Heart right ventricle (tissue), 16 donors: ENCODE measurements at regions of chr15 and their contacts with region 1.

Region 1: GRCh38 chr15:75578948-75579920 is at the start of gene PTPN9:
- DNase-seq: peak; percentile 83 to 87
- ATAC-seq: peak; percentile 88 to 93 (median 91)
- H3K4me3 ChIP-seq: peak within 1 kb of the TSS; percentile 57 to 99 (median 96)
- H3K27ac ChIP-seq: peak within 1 kb of the TSS; percentile 82 to 98 (median 94)
- H3K4me1 ChIP-seq: peaks cover 1 to 28% (median 24%) of the 10 kb centered on the region in 9 donors
- H3K27me3 ChIP-seq: no peaks in the 10 kb centered on the region
- CTCF ChIP-seq: peak; percentile 14 to 79 (median 56)
- total RNA-seq, gene PTPN9: 5.8 to 11.0 (median 8.4) TPM

Region 2: GRCh38 chr15:75468913-75469598 is 110.2 kb before region 1 on chr15:
- intact Hi-C with region 1: loop called in 1 of 10 experiments (anchors 10 kb)
- DNase-seq: peak in 1 of 2 donors; percentile 31
- ATAC-seq: peak in 2 of 8 donors; percentile 25 to 30
- H3K4me3 ChIP-seq: no peak overlapping the region
- H3K27ac ChIP-seq: peak overlapping the region in 1 of 10 donors; percentile 14
- H3K4me1 ChIP-seq: peaks cover 0 to 12% (median 8%) of the 10 kb centered on the region in 9 donors
- H3K27me3 ChIP-seq: no peaks in the 10 kb centered on the region
- CTCF ChIP-seq: no peak

Region 3: DNA sequence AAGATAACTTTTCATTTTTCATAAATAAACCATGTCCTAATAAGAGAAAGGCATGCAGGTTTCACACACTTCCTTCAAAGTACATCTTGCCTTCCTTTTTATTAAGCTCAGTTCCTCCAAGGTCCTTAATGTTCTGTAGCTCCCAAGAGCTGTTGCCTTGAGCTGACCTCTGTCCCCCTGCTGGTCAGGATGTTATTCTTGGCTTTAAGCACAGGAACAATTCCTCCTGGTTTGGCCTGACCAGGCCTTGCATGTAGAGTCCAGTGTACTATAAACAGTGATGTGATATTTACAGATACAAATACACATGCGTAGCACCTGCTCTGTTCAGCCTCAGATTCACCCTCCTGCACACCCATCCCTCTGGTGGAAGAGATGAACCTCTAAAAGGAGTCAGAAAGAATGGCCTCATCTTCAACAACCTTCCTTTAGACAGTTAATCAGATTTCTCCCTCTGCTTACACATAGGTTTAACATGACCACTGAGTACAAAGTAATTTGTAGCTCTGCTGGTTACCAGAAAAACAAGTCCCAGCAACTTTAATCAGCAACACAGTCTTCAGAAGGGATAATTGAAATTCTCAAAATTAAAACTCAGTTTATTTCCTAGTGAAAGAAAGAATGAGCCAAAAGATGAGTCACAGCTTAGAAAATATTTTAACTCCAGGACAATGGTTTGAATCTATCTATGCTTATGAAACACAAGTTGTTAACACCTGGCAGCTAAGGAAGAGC is 46.7 kb before region 1 on chr15:
- intact Hi-C with region 1: loop called in 6 of 10 experiments (anchors 2 to 5 kb)
- DNase-seq: peak; percentile 33 to 85
- ATAC-seq: peak; percentile 85 to 98 (median 95)
- H3K4me3 ChIP-seq: no peak overlapping the region
- H3K27ac ChIP-seq: peak overlapping the region in 9 of 10 donors; percentile 62 to 83 (median 74)
- H3K4me1 ChIP-seq: peaks cover 5 to 54% (median 33%) of the 10 kb centered on the region in 9 donors
- H3K27me3 ChIP-seq: no peaks in the 10 kb centered on the region
- CTCF ChIP-seq: peak; percentile 22 to 71 (median 56)

Region 4: DNA sequence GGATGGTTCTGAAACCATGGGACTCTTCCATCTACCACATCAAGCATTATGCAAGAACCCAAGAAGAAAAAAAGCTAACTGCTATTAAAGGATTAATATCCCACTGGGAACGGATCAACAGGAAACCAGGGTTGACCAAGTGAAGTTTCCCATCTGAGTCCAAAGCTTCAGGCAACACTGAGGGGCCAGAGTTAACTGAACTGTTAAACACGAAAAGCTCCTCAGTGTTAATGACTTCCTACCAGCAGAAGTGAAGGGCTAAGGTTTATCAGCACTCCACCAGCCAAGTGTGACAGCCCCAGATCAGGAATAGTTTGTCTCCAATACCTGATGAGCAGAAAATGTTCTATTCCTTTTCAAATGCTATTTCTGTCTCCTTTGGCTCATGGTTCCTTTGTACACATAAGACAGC is 36.8 kb before region 1 on chr15:
- intact Hi-C with region 1: loop called in 1 of 10 experiments (anchors 2 kb)
- DNase-seq: no peak
- ATAC-seq: peak in 6 of 8 donors; percentile 35 to 82 (median 54)
- H3K4me3 ChIP-seq: no peak overlapping the region
- H3K27ac ChIP-seq: peak overlapping the region in 8 of 10 donors; percentile 16 to 79 (median 45)
- H3K4me1 ChIP-seq: peaks cover 5 to 53% (median 28%) of the 10 kb centered on the region in 9 donors
- H3K27me3 ChIP-seq: no peaks in the 10 kb centered on the region
- CTCF ChIP-seq: no peak

Region 5: GRCh38 chr15:75625542-75626347 is 46.5 kb after region 1 on chr15 and contains the start of gene SNUPN:
- intact Hi-C with region 1: loop called in 3 of 10 experiments (anchors 1 to 10 kb)
- DNase-seq: peak; percentile 95 to 96
- ATAC-seq: peak; percentile 93 to 96 (median 95)
- H3K4me3 ChIP-seq: peak within 1 kb of the TSS; percentile 75 to 98 (median 88)
- H3K27ac ChIP-seq: peak within 1 kb of the TSS; percentile 76 to 100 (median 98)
- H3K4me1 ChIP-seq: peaks cover 0 to 30% (median 18%) of the 10 kb centered on the region in 9 donors
- H3K27me3 ChIP-seq: no peaks in the 10 kb centered on the region
- CTCF ChIP-seq: no peak
- total RNA-seq, gene SNUPN: 12.9 to 18.2 (median 16.1) TPM